Activated B cell treated with CpG ODN at 0.5 μM for 24 hours (primary cell): ENCODE measurements at regions of chr3 and their contacts with region 1.

Region 1: DNA sequence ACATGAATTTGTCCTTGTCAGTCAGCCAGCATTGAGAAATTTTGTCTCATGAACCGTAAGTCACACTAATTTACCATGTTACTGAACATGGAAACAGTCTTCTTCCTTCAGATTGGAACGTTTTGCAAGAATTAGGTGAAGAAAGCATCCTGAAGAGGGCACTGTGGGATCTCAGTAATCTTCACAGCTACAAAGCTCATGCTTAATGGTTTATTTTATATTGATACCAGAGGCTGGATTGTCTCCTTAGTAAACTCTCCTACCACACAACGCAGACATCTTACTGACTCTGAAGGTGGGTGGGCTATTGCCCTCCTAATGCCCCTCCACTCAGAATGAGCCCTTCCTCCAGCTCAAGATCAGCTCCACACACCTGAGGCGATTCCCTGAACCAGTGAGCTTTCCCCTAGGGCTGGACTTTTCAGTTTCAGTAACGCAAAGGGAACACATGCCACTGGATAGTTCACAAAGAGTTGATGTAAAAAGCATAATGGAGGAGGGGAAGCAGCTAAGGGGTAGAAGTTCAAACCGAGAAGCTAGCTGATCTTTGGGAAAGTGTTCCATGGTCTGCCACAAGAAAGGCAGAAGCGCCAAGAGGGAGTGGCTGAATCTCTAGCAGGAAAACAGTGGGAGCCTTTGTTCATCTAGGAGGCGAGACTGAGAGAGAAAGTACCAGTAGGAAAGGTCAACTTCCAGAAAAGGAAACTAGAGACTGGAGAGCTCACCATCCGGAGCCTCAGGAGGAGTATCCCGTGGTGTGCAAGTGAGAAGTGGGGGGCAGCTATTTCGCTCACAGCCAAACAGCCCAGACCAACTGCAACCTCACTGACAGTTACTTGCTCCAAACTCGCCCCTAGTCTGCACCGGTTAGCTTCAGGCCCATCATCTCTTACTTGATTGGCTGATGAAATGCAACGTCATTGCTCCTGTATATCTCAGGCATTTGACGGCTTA is at the start of gene SLC9C1:
- DNase-seq: peak; percentile 18
- ATAC-seq: peak; percentile 75
- H3K4me3 Mint-ChIP-seq: peak within 1 kb of the TSS; percentile 83
- H3K27ac Mint-ChIP-seq: peak within 1 kb of the TSS; percentile 88
- H3K4me1 Mint-ChIP-seq: peaks cover 37% of the 10 kb centered on the region
- H3K27me3 Mint-ChIP-seq: no peaks in the 10 kb centered on the region
- CTCF ChIP-seq: no peak
- total RNA-seq, gene SLC9C1: 0.24 and 0.58 TPM in 2 replicates

Region 2: GRCh38 chr3:112002096-112002971 is 291.3 kb before region 1 on chr3:
- CTCF ChIA-PET with region 1: no interaction called
- POLR2A ChIA-PET with region 1: no interaction called
- intact Hi-C with region 1: no loop called
- DNase-seq: no peak
- ATAC-seq: no peak
- H3K4me3 Mint-ChIP-seq: no peak overlapping the region
- H3K27ac Mint-ChIP-seq: no peak overlapping the region
- H3K4me1 Mint-ChIP-seq: peaks cover 15% of the 10 kb centered on the region
- H3K27me3 Mint-ChIP-seq: peaks cover 7% of the 10 kb centered on the region
- CTCF ChIP-seq: no peak

Region 3: GRCh38 chr3:112111785-112112402 is 181.8 kb before region 1 on chr3:
- CTCF ChIA-PET with region 1: interaction called, 46 read pairs
- POLR2A ChIA-PET with region 1: interaction called, 6 read pairs
- intact Hi-C with region 1: loop called (anchors 1 kb)
- DNase-seq: no peak
- ATAC-seq: peak; percentile 79
- H3K4me3 Mint-ChIP-seq: no peak overlapping the region
- H3K27ac Mint-ChIP-seq: no peak overlapping the region
- H3K4me1 Mint-ChIP-seq: peaks cover 53% of the 10 kb centered on the region
- H3K27me3 Mint-ChIP-seq: no peaks in the 10 kb centered on the region
- CTCF ChIP-seq: peak; percentile 68

Region 4: DNA sequence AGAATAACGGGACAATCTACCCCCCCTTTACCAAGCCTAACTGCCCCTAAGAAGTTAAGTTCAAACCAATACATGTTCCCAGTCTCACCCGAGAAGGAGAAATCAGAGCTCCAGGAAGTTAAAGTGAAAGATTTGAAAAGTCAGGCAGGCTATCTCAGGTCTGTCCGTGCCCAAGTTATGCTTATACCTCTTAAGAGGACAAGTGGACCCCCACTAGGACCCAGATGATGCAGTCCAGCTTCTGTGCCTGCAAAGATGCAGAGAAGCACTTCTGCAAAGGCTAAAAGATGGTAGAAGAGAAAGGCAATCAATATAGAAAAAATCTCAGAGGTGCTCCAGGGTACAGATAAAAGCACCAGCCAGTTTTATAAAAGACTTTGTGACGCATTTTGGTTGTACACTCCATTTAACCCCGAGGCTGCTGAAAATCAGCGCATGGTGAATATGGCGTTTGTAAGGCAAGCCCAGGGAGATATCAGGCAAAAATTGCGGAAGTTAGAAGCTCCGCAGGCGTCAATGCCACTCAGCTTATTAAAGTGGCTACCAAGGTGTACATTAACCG is 10.2 kb after region 1 on chr3:
- CTCF ChIA-PET with region 1: interaction called, 26 read pairs
- POLR2A ChIA-PET with region 1: interaction called, 19 read pairs
- intact Hi-C with region 1: loop called (anchors 1 kb)
- DNase-seq: peak; percentile 20
- ATAC-seq: peak; percentile 88
- H3K4me3 Mint-ChIP-seq: no peak overlapping the region
- H3K27ac Mint-ChIP-seq: no peak overlapping the region
- H3K4me1 Mint-ChIP-seq: peaks cover 7% of the 10 kb centered on the region
- H3K27me3 Mint-ChIP-seq: no peaks in the 10 kb centered on the region
- CTCF ChIP-seq: no peak

Region 5: GRCh38 chr3:112333002-112333380 is 39.3 kb after region 1 on chr3 and contains the start of gene CD200:
- CTCF ChIA-PET with region 1: interaction called, 10 read pairs
- POLR2A ChIA-PET with region 1: interaction called, 4 read pairs
- intact Hi-C with region 1: no loop called
- DNase-seq: peak; percentile 45
- ATAC-seq: peak; percentile 77
- H3K4me3 Mint-ChIP-seq: peak within 1 kb of the TSS; percentile 94
- H3K27ac Mint-ChIP-seq: peak within 1 kb of the TSS; percentile 94
- H3K4me1 Mint-ChIP-seq: peaks cover 59% of the 10 kb centered on the region
- H3K27me3 Mint-ChIP-seq: no peaks in the 10 kb centered on the region
- CTCF ChIP-seq: no peak
- total RNA-seq, gene CD200: 19.0 and 19.4 TPM in 2 replicates

Region 6: DNA sequence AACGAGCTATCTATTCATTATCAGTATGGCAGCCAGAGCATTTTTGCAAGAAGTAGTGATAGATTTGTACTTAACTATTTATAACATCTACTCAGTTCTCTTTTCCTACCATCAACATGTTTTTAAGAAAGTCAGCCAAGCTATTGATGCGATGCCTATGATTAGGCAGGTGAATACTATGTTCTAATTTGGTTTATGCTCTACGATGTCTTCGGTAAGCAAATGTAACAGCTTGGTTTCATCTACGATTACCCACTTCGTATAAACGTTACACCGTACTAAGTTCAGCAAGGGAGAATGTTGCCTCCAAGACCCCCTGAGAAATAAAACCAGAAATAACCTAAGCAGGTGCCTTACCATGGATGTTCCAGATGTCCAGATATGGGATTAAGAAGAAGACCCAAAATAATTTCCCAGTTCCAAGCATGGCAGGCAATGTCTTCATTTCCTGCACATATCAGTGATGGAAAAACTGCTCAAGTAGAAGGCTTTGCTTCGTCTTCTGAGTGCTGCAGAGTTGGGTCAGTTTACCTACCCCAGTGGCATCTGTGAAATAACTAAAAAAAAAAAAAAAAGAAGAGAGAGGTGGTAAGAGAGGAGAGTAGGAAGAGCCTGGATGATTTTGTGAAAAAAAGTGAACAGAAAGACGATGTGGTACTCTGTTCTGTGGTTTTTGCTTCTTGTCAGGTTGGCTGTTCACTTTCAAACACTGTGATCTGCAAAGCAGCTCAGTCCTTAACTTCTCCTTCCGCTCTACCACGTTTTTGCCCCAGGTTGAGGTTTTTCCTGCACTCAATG is 205.5 kb after region 1 on chr3 and contains the start of gene BTLA:
- CTCF ChIA-PET with region 1: interaction called, 11 read pairs
- POLR2A ChIA-PET with region 1: interaction called, 11 read pairs
- intact Hi-C with region 1: no loop called
- DNase-seq: no peak
- ATAC-seq: peak; percentile 68
- H3K4me3 Mint-ChIP-seq: peak within 1 kb of the TSS; percentile 92
- H3K27ac Mint-ChIP-seq: peak within 1 kb of the TSS; percentile 99
- H3K4me1 Mint-ChIP-seq: peaks cover 82% of the 10 kb centered on the region
- H3K27me3 Mint-ChIP-seq: no peaks in the 10 kb centered on the region
- CTCF ChIP-seq: no peak
- total RNA-seq, gene BTLA: 49.8 and 53.2 TPM in 2 replicates

Region 7: GRCh38 chr3:112531358-112531781 is 237.7 kb after region 1 on chr3:
- CTCF ChIA-PET with region 1: interaction called, 19 read pairs
- POLR2A ChIA-PET with region 1: no interaction called
- intact Hi-C with region 1: loop called (anchors 1 kb)
- DNase-seq: no peak
- ATAC-seq: no peak
- H3K4me3 Mint-ChIP-seq: no peak overlapping the region
- H3K27ac Mint-ChIP-seq: peak overlapping the region; percentile 27
- H3K4me1 Mint-ChIP-seq: peaks cover 3% of the 10 kb centered on the region
- H3K27me3 Mint-ChIP-seq: no peaks in the 10 kb centered on the region
- CTCF ChIP-seq: peak; percentile 9

Region 8: DNA sequence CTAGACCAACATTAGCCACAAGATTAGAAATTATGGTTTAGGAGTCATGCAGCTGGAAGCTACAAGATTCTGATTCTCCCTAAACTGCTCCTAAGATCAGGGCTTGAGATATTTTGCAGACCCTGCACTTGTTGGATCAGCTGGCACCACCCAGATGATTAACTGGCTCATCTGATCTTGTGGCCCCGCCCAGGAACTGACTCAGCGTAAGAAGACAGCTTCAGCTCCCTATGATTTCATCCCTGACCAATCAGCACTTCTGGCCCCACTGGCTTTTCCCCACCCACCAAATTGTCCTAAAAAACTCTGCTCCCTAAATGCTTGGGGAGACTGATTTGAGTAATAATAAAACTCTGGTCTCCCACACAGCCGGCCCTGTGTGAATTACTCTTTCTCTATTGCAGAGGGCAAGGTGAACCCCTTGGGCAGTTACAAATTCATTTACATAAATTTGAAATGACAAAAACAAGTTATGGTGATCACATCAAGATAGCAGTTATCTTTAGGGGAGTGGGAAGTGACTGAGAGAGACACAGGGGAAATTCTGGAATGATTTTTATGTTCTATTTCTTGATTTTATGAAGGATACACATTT is 476.5 kb after region 1 on chr3:
- CTCF ChIA-PET with region 1: no interaction called
- POLR2A ChIA-PET with region 1: no interaction called
- intact Hi-C with region 1: no loop called
- DNase-seq: no peak
- ATAC-seq: no peak
- H3K4me3 Mint-ChIP-seq: no peak overlapping the region
- H3K27ac Mint-ChIP-seq: no peak overlapping the region
- H3K4me1 Mint-ChIP-seq: peaks cover 55% of the 10 kb centered on the region
- H3K27me3 Mint-ChIP-seq: no peaks in the 10 kb centered on the region
- CTCF ChIP-seq: no peak

Region 9: DNA sequence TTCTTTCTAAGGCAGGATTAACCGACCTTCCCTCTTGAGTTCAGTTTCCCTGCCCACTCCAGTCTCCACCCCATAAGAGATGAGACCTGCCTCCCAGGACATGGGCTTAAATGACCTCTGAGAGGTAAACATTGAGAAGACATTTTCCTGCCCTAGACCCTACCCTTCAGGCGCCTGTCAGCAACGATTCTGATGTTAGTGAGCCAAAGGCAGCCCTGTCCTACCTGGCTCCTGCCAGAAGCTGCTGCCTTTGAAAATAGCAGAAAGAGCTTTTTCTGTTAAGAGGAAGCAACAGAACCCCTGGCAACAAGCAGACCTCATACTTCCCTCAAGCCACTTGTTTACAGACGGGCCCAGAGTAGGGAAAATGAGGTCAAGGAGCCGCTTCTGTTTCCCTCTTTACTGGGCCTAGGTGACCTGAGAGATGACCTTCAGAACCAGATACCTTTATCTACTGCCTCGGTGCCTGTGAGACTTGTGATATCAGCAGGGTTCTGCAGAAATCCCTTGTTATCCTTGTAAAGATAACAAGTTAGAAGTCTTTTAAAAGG is 501.1 kb after region 1 on chr3:
- CTCF ChIA-PET with region 1: no interaction called
- POLR2A ChIA-PET with region 1: no interaction called
- intact Hi-C with region 1: no loop called
- DNase-seq: no peak
- ATAC-seq: peak; percentile 31
- H3K4me3 Mint-ChIP-seq: peak overlapping the region; percentile 12
- H3K27ac Mint-ChIP-seq: peak overlapping the region; percentile 46
- H3K4me1 Mint-ChIP-seq: peaks cover 27% of the 10 kb centered on the region
- H3K27me3 Mint-ChIP-seq: no peaks in the 10 kb centered on the region
- CTCF ChIP-seq: no peak